ENCODE measurements at regions of chr15 and their contacts with region 1.

Region 1: DNA sequence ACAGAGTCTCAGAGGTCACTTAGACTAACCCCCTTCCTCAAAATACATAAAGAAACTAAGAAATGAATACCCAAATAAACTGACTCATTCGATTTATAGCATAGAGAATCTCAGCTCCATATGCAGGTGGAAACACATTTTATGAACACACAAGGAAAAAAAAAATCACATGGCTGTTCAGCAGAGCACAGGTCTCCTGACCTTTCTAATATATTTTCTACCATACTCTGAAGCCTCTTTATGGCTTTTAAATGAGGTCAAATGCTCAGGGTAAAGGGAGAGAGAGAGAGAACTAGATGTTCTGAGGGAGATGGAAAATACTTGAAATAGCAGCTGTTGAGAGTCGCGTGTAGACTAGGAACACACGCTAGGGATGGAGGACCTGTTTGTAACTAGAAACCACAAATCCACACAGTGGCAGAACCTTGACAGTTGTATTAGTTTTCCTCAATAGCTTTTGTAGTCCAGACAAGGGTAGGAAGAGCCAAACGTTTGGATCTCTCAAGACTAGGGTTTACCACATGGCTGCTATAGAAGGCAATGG is 165.3 kb downstream of the FMN1 start:
- DNase-seq: no peak
- ATAC-seq: no peak
- H3K4me3 Mint-ChIP-seq: no peak overlapping the region
- H3K27ac Mint-ChIP-seq: no peak overlapping the region
- H3K4me1 Mint-ChIP-seq: peaks cover 9% of the 10 kb centered on the region
- H3K27me3 Mint-ChIP-seq: no peaks in the 10 kb centered on the region

Region 2: DNA sequence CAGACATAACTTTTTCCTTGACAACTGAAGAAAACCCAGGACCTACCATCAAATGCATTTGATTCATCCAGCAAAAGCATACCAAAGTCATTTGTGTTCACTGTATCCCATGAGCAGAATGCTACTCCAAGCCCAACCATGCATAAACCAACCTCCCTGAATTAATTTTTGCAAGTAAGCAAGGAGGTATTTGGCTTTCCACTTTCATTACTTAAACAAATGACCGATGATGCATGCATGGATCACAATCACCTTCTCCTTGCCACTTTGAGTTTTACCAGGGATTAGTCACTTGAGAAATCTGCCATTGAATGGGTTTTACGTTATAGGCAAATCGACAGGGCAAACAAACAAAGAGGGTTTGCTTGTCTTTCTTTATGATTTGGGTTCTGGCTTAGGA is 49.5 kb before region 1 on chr15:
- CTCF ChIA-PET with region 1: no interaction called
- POLR2A ChIA-PET with region 1: no interaction called
- intact Hi-C with region 1: loop called in 1 of 2 experiments (anchors 5 kb)
- DNase-seq: no peak
- ATAC-seq: no peak
- H3K4me3 Mint-ChIP-seq: no peak overlapping the region
- H3K27ac Mint-ChIP-seq: no peak overlapping the region
- H3K4me1 Mint-ChIP-seq: no peaks in the 10 kb centered on the region
- H3K27me3 Mint-ChIP-seq: peaks cover 2% of the 10 kb centered on the region

Region 3: GRCh38 chr15:33154351-33155166 is 125.4 kb after region 1 on chr15:
- CTCF ChIA-PET with region 1: no interaction called
- POLR2A ChIA-PET with region 1: no interaction called
- intact Hi-C with region 1: loop called in 1 of 2 experiments (anchors 5 kb)
- DNase-seq: no peak
- ATAC-seq: no peak
- H3K4me3 Mint-ChIP-seq: no peak overlapping the region
- H3K27ac Mint-ChIP-seq: no peak overlapping the region
- H3K4me1 Mint-ChIP-seq: peaks cover 4% of the 10 kb centered on the region
- H3K27me3 Mint-ChIP-seq: peaks cover 2% of the 10 kb centered on the region